Common myeloid progenitor, CD34-positive (primary cell): ENCODE measurements at regions of chr17 and their contacts with region 1.

Region 1: DNA sequence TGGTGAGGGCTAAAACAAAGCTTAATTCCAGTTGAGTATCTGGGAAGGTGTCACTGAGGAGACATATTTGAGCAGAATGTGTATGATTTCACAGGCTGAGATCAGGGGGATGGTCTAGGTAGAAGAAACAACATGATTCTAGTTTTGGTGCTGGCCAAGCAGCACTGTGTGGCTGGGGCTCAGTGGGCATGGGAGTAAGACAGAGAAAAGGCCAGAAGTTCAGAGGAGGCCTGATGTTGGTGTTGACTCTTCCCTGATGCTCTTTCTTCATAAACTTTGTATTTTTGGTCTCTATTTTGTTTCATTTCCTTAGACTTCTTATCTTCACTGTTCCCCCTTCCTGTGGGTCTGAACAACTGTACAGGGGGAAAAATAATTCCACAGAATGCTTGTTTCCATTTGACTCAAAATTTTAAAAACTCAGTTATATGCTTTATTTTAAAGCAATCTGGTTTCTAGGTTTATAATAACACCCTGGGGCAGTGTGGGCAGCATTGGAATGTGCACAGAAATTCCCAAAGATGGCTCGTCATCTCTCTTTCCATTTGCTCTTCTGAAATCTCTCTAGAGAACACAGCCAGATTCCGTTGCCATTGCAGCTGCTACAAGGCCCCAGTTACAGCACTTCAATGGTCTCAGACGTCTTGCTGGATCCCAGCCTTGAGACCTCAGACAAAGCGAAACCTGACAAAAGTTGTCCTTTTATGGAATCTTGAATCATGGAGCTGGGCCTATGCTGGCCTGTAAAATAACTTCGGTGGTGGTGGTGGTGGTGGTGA is 68.3 kb downstream of the SNX11 start:
- DNase-seq: no peak
- H3K4me3 ChIP-seq: peak overlapping the region in 1 of 7 experiments; percentile 24
- H3K27ac ChIP-seq: peak overlapping the region; percentile 2 to 13
- H3K4me1 ChIP-seq: peaks cover 3 to 37% (median 17%) of the 10 kb centered on the region in 4 experiments
- H3K27me3 ChIP-seq: no peaks in the 10 kb centered on the region

Region 2: DNA sequence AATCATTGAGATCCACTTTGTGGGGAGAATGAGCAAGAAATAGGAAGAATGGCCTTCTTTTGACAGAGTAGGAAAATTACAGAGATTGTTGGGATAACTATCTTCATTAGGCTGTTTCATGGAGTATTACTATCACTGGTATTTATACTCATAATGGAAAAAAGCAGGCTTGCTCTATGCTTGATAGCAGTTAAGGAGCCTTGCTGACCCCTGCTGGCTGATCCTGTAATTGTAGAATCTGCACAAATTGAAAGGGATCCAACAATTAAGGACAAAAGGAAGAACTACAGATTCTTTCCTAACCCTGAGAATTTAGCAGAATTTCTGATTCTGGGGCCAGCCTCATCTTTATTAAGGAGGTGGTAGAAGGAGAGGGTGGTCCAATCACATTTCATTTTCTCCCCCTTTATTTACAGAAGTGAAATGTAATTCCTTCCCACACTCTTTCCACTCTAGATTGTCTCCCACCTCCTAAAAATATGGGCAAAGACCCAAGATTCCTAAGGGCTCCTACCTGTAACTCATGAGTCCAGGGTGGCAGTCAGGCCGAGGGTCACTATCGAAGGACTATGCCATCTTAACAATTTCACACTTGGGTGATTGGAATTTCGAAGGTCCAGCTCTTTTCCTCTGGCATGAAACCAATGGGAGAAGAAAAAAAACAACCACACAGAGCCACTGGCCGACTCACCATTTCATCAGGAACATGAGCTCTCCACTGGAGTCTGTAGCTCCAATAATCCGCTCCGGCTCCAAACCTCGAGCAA is 101.4 kb before region 1 on chr17:
- CTCF ChIA-PET with region 1: no interaction called
- POLR2A ChIA-PET with region 1: no interaction called
- DNase-seq: peak; percentile 72 to 84 (median 75)
- H3K4me3 ChIP-seq: no peak overlapping the region
- H3K27ac ChIP-seq: no peak overlapping the region
- H3K4me1 ChIP-seq: no peaks in the 10 kb centered on the region
- H3K27me3 ChIP-seq: no peaks in the 10 kb centered on the region

Region 3: GRCh38 chr17:48162946-48163506 is 12.9 kb before region 1 on chr17:
- CTCF ChIA-PET with region 1: interaction called, 11 read pairs
- POLR2A ChIA-PET with region 1: no interaction called
- DNase-seq: peak; percentile 24 to 62 (median 60)
- H3K4me3 ChIP-seq: peak overlapping the region in 1 of 7 experiments; percentile 32
- H3K27ac ChIP-seq: no peak overlapping the region
- H3K4me1 ChIP-seq: peaks cover 0 to 7% (median 0%) of the 10 kb centered on the region in 4 experiments
- H3K27me3 ChIP-seq: no peaks in the 10 kb centered on the region

Region 4: GRCh38 chr17:48194097-48194550 is 18.2 kb after region 1 on chr17:
- CTCF ChIA-PET with region 1: interaction called, 10 read pairs
- POLR2A ChIA-PET with region 1: interaction called, 4 read pairs
- DNase-seq: peak in 2 of 3 donors; percentile 36 to 52
- H3K4me3 ChIP-seq: no peak overlapping the region
- H3K27ac ChIP-seq: no peak overlapping the region
- H3K4me1 ChIP-seq: peaks cover 3 to 22% (median 6%) of the 10 kb centered on the region in 4 experiments
- H3K27me3 ChIP-seq: no peaks in the 10 kb centered on the region

Region 5: DNA sequence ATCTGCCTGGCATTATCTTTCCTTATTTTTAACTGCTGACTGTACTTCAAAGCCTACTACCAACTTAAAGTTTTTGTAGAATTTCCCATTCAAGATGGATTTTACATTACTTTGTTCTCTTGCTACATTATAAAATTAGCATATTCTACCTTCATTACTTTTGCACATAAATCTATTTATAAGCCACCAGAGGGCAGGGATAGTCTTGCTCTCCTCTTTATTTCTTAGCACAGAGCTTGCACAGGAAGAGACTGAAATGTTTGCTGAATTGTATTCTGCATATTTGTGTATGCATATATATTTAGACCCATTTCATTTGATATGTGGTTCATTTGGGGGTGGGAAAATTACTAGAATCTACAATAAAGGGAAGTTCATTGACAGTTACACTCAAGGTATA is 146.2 kb after region 1 on chr17:
- CTCF ChIA-PET with region 1: no interaction called
- POLR2A ChIA-PET with region 1: no interaction called
- DNase-seq: peak; percentile 15 to 53 (median 52)
- H3K4me3 ChIP-seq: no peak overlapping the region
- H3K27ac ChIP-seq: no peak overlapping the region
- H3K4me1 ChIP-seq: no peaks in the 10 kb centered on the region
- H3K27me3 ChIP-seq: no peaks in the 10 kb centered on the region

Region 6: GRCh38 chr17:48335858-48336500 is 160.1 kb after region 1 on chr17:
- CTCF ChIA-PET with region 1: no interaction called
- POLR2A ChIA-PET with region 1: no interaction called
- DNase-seq: peak; percentile 69 to 79 (median 71)
- H3K4me3 ChIP-seq: peak overlapping the region in 1 of 7 experiments; percentile 50
- H3K27ac ChIP-seq: no peak overlapping the region
- H3K4me1 ChIP-seq: peaks cover 0 to 3% (median 0%) of the 10 kb centered on the region in 4 experiments
- H3K27me3 ChIP-seq: no peaks in the 10 kb centered on the region